PC-3 (cell line): ENCODE measurements at regions of chr19 and their contacts with region 1.

Region 1: GRCh38 chr19:10864538-10864899 is 6.8 kb upstream of the CARM1 start:
- DNase-seq: peak; percentile 90
- ATAC-seq: peak; percentile 97
- H3K4me3 ChIP-seq: no peak overlapping the region
- H3K27ac ChIP-seq: no peak overlapping the region
- H3K4me1 ChIP-seq: peaks cover 3% of the 10 kb centered on the region; the same call in 1 of the 2 replicates
- H3K27me3 ChIP-seq: no peaks in the 10 kb centered on the region
- CTCF ChIP-seq: peak; percentile 96

Region 2: GRCh38 chr19:10899151-10899653 is 34.7 kb after region 1 on chr19:
- CTCF ChIA-PET with region 1: no interaction called
- POLR2A ChIA-PET with region 1: interaction called, 11 read pairs
- intact Hi-C with region 1: no loop called
- DNase-seq: peak; percentile 95
- ATAC-seq: peak; percentile 75
- H3K4me3 ChIP-seq: peak overlapping the region; percentile 35; the same call in 1 of the 2 replicates
- H3K27ac ChIP-seq: peak overlapping the region; percentile 73
- H3K4me1 ChIP-seq: peaks cover 36% of the 10 kb centered on the region
- H3K27me3 ChIP-seq: no peaks in the 10 kb centered on the region
- CTCF ChIP-seq: no peak